B cell (primary cell): ENCODE measurements at regions of chr5 and their contacts with region 1.

Region 1: DNA sequence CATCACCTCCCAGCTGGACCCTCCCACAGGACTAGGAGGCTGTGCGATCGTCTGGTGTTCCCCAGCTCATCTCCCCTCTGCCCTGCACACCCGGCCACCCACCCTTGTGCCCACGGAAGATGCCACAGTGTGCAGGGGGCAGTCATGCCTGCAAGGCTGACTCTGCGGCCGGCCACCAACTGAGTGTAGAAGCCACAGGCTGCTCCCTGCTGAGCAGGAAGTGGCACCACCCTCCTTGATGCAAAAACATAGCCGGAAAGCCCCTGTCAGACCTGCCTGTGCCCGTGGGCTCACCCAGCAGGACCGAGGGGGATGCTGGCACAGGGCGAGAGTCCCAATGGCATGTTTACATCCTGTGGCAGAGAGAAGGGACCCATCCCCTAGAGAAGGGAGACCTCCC is 40.3 kb upstream of the SLC12A7 start:
- DNase-seq: peak; percentile 73
- ATAC-seq: peak; percentile 83
- H3K4me3 ChIP-seq: peak overlapping the region in 2 of 5 experiments; percentile 20 to 42
- H3K4me3 Mint-ChIP-seq: peak overlapping the region; percentile 77
- H3K27ac ChIP-seq: peak overlapping the region; percentile 68 to 71
- H3K27ac Mint-ChIP-seq: peak overlapping the region; percentile 89
- H3K4me1 ChIP-seq: peaks cover 48 to 53% of the 10 kb centered on the region in 2 donors
- H3K4me1 Mint-ChIP-seq: peaks cover 41% of the 10 kb centered on the region
- H3K27me3 ChIP-seq: peaks cover 0 to 31% (median 8%) of the 10 kb centered on the region in 4 experiments
- H3K27me3 Mint-ChIP-seq: peaks cover 16% of the 10 kb centered on the region
- CTCF ChIP-seq: no peak

Region 2: DNA sequence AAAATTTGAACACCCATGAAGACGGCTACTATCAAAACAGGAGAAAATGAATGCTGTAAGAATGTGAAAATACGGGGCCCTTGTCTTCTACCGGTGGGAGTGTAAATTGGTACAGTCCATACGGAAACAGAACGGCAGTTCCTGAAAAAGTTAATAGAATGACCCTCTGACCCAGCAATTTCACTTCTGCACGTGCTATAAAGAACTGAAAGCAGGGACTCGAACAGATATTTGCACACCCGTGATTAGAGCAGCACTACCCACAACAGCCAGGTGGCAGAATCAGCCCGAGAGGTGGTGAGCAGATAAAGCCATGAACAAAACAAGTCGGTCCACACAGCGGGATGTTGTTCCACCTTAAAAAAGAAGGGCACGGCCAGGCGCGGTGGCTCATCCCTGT is 17.7 kb before region 1 on chr5:
- CTCF ChIA-PET with region 1: interaction called, 48 read pairs
- POLR2A ChIA-PET with region 1: interaction called, 3 read pairs
- intact Hi-C with region 1: loop called (anchors 2 kb)
- DNase-seq: peak; percentile 83
- ATAC-seq: peak; percentile 80
- H3K4me3 ChIP-seq: no peak overlapping the region
- H3K4me3 Mint-ChIP-seq: peak overlapping the region; percentile 58
- H3K27ac ChIP-seq: no peak overlapping the region
- H3K27ac Mint-ChIP-seq: peak overlapping the region; percentile 38
- H3K4me1 ChIP-seq: peaks cover 34 to 50% of the 10 kb centered on the region in 2 donors
- H3K4me1 Mint-ChIP-seq: peaks cover 43% of the 10 kb centered on the region
- H3K27me3 ChIP-seq: peaks cover 0 to 7% (median 3%) of the 10 kb centered on the region in 4 experiments
- H3K27me3 Mint-ChIP-seq: peaks cover 15% of the 10 kb centered on the region
- CTCF ChIP-seq: peak; percentile 53

Region 3: GRCh38 chr5:1140171-1140817 is 11.9 kb before region 1 on chr5:
- CTCF ChIA-PET with region 1: interaction called, 48 read pairs
- POLR2A ChIA-PET with region 1: interaction called, 5 read pairs
- intact Hi-C with region 1: loop called (anchors 2 kb)
- DNase-seq: peak; percentile 82
- ATAC-seq: peak; percentile 86
- H3K4me3 ChIP-seq: peak overlapping the region in 1 of 5 experiments; percentile 12
- H3K4me3 Mint-ChIP-seq: peak overlapping the region; percentile 78
- H3K27ac ChIP-seq: no peak overlapping the region
- H3K27ac Mint-ChIP-seq: peak overlapping the region; percentile 42
- H3K4me1 ChIP-seq: peaks cover 26 to 41% of the 10 kb centered on the region in 2 donors
- H3K4me1 Mint-ChIP-seq: peaks cover 29% of the 10 kb centered on the region
- H3K27me3 ChIP-seq: peaks cover 0 to 8% (median 2%) of the 10 kb centered on the region in 4 experiments
- H3K27me3 Mint-ChIP-seq: peaks cover 18% of the 10 kb centered on the region
- CTCF ChIP-seq: peak; percentile 70